ENCODE measurements at regions of chrX and their contacts with region 1.

Region 1: GRCh38 chrX:132092439-132093065 is 35.3 kb downstream of the FRMD7 start:
- DNase-seq: peak; percentile 2
- H3K4me3 ChIP-seq: no peak overlapping the region
- H3K27ac ChIP-seq: no peak overlapping the region
- H3K27me3 ChIP-seq: no peaks in the 10 kb centered on the region
- CTCF ChIP-seq: peak; percentile 69

Region 2: DNA sequence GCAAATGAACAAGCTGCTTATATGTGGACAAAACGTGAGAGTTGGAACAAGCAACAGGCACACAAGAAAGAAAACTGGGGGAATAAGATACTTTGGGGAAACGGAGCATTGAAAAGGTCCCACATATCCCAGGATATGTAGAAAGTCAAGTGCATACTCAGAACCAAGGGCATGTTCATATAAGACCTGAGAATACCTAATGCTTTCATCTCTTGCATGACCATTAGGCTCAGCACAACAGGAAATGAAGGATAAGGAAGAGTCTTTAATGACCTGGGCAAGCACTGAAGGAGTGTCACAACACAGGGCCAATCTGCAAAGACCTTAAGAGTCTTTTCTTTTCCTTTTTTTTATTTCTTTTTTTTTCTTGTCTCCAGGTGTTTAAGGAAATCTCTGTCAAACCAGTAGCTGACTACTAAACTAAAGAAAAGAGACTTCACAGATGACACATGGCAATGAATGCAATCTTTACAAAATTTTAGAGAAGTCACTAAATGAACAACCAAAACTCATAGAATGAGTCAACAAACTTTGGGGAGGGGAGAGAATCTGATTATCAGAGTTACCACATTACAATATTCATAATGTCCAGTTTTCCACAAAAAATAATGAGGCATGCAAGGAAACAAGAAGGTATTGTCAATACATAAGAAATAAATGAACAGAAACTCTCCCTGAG is 137.3 kb before region 1 on chrX:
- CTCF ChIA-PET with region 1: no interaction called
- POLR2A ChIA-PET with region 1: no interaction called
- DNase-seq: no peak
- H3K4me3 ChIP-seq: no peak overlapping the region
- H3K27ac ChIP-seq: no peak overlapping the region
- H3K27me3 ChIP-seq: no peaks in the 10 kb centered on the region
- CTCF ChIP-seq: no peak

Region 3: DNA sequence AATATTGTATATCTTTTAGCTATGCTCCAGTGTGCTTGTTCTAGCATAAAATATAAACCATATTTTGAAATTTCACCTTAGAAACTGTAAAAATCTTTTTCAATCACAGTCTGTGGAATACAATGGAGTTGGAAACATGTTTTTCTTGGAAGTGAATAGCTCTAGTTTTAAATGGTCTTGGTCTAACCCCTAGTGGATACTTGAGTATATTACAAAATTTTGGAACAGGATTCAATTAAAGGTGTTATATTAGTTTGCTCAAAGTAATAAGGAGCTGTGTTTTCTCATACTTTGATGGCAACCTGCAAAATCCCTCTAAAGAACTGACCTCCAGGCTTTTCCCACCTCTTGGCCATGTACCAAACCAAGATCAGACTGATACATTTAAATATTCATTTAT is 21.3 kb before region 1 on chrX:
- CTCF ChIA-PET with region 1: interaction called, 12 read pairs
- POLR2A ChIA-PET with region 1: no interaction called
- DNase-seq: no peak
- H3K4me3 ChIP-seq: no peak overlapping the region
- H3K27ac ChIP-seq: no peak overlapping the region
- H3K27me3 ChIP-seq: no peaks in the 10 kb centered on the region
- CTCF ChIP-seq: no peak

Region 4: DNA sequence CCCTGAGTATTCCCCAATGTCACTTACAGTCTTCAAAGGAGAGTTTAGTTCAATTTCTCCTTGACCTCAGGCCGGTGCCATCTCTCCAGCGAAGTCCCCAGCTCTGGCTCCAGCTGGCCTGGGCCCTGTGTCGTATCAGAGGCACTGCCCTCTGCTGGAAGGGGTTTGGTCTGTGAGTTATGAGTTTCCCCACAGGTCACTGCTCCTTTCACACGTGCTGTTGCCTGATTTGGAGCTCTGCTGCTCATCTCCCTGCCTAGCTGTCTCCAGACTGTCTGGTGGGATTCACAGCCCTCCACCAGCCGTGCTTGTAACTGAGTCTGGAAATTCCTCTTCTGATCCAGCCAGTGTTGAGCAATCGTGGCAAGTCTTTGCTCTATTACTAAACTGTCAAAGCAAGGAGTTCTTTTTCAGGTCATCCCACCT is 126.8 kb after region 1 on chrX and contains the start of gene RAP2C:
- CTCF ChIA-PET with region 1: interaction called, 55 read pairs
- POLR2A ChIA-PET with region 1: interaction called, 3 read pairs
- DNase-seq: no peak
- H3K4me3 ChIP-seq: peak within 1 kb of the TSS; percentile 63
- H3K27ac ChIP-seq: peak within 1 kb of the TSS; percentile 77
- H3K27me3 ChIP-seq: no peaks in the 10 kb centered on the region
- CTCF ChIP-seq: peak; percentile 63
- polyA plus RNA-seq, gene RAP2C: 14.4 and 19.5 TPM in 2 replicates

Region 5: DNA sequence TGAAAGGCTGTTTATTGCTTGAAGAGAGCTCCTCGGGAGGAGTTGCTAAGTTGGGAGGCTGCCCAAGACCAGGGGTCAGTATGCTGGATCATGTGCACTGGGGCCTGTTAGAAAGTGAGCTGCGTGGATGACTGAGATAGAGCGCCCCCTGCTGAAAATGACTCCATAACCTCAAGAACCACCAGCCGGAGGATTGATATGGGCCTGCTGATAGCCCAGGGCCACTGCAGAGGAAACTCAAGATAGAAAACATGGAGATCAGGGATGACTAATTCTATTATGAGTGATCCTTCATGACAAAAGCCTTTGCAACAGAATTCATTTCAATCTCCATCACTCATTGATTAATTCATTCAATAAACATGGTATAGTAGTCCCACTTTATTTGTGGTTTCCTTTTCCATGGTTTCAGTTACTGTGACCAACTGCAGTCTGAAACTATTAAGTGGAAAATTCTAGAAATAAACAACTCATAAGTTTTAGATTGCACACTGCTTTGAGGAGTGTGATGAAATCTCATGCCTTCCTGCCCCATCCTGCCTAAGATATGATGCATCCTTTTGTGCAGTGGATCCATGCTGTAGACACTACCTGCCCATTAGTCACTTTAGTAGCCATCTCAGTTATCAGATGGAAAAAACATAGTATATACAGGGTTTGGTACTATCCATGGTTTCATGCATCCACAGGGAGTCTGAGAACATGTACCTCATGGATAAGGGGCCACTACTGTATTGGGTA is 523.0 kb after region 1 on chrX:
- CTCF ChIA-PET with region 1: interaction called, 15 read pairs
- POLR2A ChIA-PET with region 1: no interaction called
- DNase-seq: no peak
- H3K4me3 ChIP-seq: no peak overlapping the region
- H3K27ac ChIP-seq: no peak overlapping the region
- H3K27me3 ChIP-seq: no peaks in the 10 kb centered on the region
- CTCF ChIP-seq: peak; percentile 33

Region 6: GRCh38 chrX:132631579-132632232 is 539.2 kb after region 1 on chrX:
- CTCF ChIA-PET with region 1: interaction called, 13 read pairs
- POLR2A ChIA-PET with region 1: no interaction called
- DNase-seq: no peak
- H3K4me3 ChIP-seq: no peak overlapping the region
- H3K27ac ChIP-seq: no peak overlapping the region
- H3K27me3 ChIP-seq: no peaks in the 10 kb centered on the region
- CTCF ChIP-seq: peak; percentile 51